Mammary epithelial cell (primary cell): ENCODE measurements at regions of chr22 and their contacts with region 1.

Region 1: DNA sequence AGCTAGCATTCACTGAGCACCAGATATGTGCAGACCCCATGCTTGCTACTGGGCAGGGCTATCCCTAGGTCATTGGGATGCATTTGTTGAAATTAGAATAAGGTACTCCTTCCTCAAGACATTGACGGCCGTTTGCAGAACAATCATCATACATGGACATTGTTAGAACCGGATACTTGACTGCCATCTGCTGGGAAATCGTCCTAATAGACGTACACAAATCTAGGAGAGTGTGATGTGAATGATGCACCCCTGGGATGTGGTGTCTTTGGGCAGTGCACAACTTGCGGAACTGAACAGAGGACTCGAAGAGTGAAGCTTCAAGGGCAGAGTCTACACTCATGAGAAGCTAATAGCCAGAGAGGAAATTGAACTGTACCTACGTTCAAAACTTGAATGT is 35.9 kb downstream of the MYO18B start:
- DNase-seq: peak; percentile 50
- H3K4me3 ChIP-seq: no peak overlapping the region
- H3K27ac ChIP-seq: no peak overlapping the region
- H3K4me1 ChIP-seq: no peaks in the 10 kb centered on the region
- H3K27me3 ChIP-seq: no peaks in the 10 kb centered on the region
- CTCF ChIP-seq: peak; percentile 35 to 58

Region 2: DNA sequence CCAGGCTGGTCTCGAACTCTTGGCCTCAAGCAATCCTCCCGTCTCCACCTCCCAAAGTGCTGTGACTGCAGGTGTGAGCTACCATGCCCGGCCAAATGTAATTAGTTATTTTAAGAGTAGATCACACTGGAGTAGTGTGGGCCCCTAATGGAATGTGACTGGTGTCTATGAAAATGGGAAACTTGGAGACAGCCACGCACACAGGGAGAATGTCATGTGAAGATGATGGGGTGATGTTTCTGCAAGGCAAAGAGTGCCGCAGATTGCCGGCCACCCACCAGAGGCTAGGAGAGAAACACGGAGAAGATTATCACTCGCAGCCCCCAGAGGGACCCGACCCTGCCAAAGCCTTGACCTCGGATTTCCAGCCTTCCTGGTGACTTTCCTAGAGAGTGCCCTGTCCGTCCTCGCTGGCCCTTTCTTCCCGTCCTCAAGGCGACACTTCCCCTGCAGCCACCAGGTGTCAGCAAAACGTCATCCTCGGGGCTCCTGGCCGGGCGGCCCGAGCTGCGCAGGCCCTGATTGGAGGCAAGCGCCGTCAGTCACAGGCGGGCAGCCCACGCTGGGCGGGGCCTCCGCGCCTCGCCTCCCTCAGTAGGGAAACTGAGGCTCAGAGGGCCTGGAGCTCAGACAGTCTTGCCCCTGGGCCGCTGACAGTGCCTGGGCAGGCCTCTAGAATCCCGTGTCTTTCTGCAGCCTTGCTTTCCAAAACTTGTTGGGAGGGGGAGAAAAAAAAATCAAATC is 542.2 kb before region 1 on chr22:
- CTCF ChIA-PET with region 1: no interaction called
- dilution Hi-C with region 1: no loop called
- in situ Hi-C with region 1: no loop called
- intact Hi-C with region 1: loop called (anchors 5 kb)
- DNase-seq: peak; percentile 67
- H3K4me3 ChIP-seq: no peak overlapping the region
- H3K27ac ChIP-seq: no peak overlapping the region
- H3K4me1 ChIP-seq: no peaks in the 10 kb centered on the region
- H3K27me3 ChIP-seq: no peaks in the 10 kb centered on the region
- CTCF ChIP-seq: peak; percentile 60 to 87

Region 3: GRCh38 chr22:25447686-25448434 is 330.0 kb before region 1 on chr22:
- CTCF ChIA-PET with region 1: no interaction called
- dilution Hi-C with region 1: no loop called
- in situ Hi-C with region 1: no loop called
- intact Hi-C with region 1: loop called (anchors 1 kb)
- DNase-seq: peak; percentile 80
- H3K4me3 ChIP-seq: peak overlapping the region; percentile 80 to 93 (median 90)
- H3K27ac ChIP-seq: peak overlapping the region; percentile 82
- H3K4me1 ChIP-seq: peaks cover 21% of the 10 kb centered on the region
- H3K27me3 ChIP-seq: no peaks in the 10 kb centered on the region
- CTCF ChIP-seq: peak; percentile 88 to 94

Region 4: GRCh38 chr22:25540166-25540907 is 237.5 kb before region 1 on chr22:
- CTCF ChIA-PET with region 1: interaction called, 4 read pairs
- dilution Hi-C with region 1: no loop called
- in situ Hi-C with region 1: no loop called
- intact Hi-C with region 1: loop called (anchors 5 kb)
- DNase-seq: no peak
- H3K4me3 ChIP-seq: no peak overlapping the region
- H3K27ac ChIP-seq: no peak overlapping the region
- H3K4me1 ChIP-seq: no peaks in the 10 kb centered on the region
- H3K27me3 ChIP-seq: no peaks in the 10 kb centered on the region
- CTCF ChIP-seq: no peak

Region 5: GRCh38 chr22:26330966-26331625 is 553.2 kb after region 1 on chr22:
- CTCF ChIA-PET with region 1: interaction called, 6 read pairs
- dilution Hi-C with region 1: loop called (anchors 5 kb)
- in situ Hi-C with region 1: loop called (anchors 5 kb)
- intact Hi-C with region 1: loop called (anchors 1 kb)
- DNase-seq: peak; percentile 57
- H3K4me3 ChIP-seq: no peak overlapping the region
- H3K27ac ChIP-seq: no peak overlapping the region
- H3K4me1 ChIP-seq: no peaks in the 10 kb centered on the region
- H3K27me3 ChIP-seq: no peaks in the 10 kb centered on the region
- CTCF ChIP-seq: peak; percentile 92